Mammary epithelial cell (primary cell): ENCODE measurements at regions of chr20 and their contacts with region 1.

Region 1: GRCh38 chr20:47088335-47088734 is 193.7 kb downstream of the EYA2 start:
- DNase-seq: no peak
- H3K4me3 ChIP-seq: no peak overlapping the region
- H3K27ac ChIP-seq: no peak overlapping the region
- H3K4me1 ChIP-seq: no peaks in the 10 kb centered on the region
- H3K27me3 ChIP-seq: no peaks in the 10 kb centered on the region
- CTCF ChIP-seq: no peak

Region 2: DNA sequence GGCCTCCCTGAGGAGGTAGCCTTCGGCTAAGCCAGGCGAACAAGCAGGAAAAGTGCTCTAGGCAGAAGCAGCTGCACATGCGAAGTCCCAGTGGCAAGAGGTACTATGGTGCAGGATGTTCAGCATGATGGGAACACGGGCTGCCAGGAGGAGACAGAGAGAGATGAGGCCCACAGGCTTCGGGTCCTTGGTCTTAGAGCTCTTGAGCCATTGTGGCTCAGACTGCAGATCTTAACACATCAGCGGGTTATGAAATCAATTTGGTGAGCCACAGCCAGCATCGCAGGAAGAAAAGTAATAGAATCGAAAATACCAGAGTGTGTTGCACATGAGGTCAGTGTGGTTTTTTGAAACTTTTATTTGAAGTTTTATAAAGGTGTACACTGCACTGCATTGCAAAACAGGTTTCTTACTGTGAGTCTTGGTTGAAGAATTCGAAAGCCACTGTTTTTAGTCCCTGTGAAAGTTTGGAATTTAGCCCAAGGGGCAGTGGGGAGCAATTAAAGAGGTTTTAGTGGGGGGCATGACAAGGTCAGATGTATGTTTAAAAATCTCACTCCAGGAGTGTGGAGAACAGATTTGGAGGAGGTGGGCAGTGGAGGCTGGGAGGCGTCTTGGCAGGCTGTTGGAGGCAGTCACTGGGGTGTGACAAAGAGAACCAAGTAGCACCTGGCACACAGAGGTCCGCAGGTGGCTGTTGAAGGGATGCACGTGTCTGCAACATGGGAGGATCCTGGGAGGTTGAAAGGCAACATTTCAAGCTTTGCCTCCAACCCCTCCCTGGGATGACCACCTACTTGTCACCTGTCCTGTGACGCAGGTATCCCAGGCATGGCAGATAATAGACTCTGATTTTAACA is 124.3 kb before region 1 on chr20:
- CTCF ChIA-PET with region 1: no interaction called
- dilution Hi-C with region 1: no loop called
- in situ Hi-C with region 1: no loop called
- intact Hi-C with region 1: no loop called
- DNase-seq: peak; percentile 89
- H3K4me3 ChIP-seq: no peak overlapping the region
- H3K27ac ChIP-seq: no peak overlapping the region
- H3K4me1 ChIP-seq: peaks cover 30% of the 10 kb centered on the region
- H3K27me3 ChIP-seq: no peaks in the 10 kb centered on the region
- CTCF ChIP-seq: no peak

Region 3: DNA sequence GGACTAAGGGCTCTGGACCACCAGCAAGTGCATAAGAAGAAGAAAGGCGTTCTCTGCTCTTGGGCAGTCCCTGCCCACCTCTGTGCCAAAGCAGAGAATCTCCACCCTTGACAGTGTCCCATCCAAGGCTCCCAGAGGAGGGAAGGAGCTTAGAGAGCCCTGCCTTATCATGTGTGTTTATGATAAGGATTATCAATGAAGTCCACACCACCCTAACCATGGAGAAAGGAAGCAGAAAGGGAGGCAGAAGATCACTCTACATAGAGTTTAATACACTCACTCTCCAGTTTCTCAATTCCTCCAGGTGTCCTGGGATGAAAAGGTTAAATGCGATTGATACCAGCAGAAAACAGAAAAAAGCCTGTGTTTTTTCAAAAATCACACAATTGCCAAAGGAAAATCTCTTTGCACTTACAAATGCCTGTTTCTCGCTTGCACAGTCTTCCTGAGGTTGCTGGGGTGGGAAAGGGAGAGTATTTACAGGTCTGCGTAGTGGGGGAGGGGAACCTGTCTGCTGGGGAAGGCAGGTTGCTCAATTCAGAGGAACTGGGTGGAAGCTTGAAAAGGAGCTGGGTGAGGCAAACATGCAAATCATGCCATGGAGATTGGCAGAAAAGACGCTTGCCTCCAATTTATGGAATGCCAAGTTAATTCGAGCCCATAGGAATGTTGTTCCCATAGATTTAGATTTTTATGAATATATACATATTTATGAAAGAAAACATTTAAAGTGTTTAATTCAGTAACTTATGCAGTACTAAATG is 89.7 kb before region 1 on chr20:
- CTCF ChIA-PET with region 1: no interaction called
- dilution Hi-C with region 1: loop called (anchors 5 kb)
- in situ Hi-C with region 1: no loop called
- intact Hi-C with region 1: no loop called
- DNase-seq: no peak
- H3K4me3 ChIP-seq: no peak overlapping the region
- H3K27ac ChIP-seq: no peak overlapping the region
- H3K4me1 ChIP-seq: no peaks in the 10 kb centered on the region
- H3K27me3 ChIP-seq: no peaks in the 10 kb centered on the region
- CTCF ChIP-seq: no peak

Region 4: DNA sequence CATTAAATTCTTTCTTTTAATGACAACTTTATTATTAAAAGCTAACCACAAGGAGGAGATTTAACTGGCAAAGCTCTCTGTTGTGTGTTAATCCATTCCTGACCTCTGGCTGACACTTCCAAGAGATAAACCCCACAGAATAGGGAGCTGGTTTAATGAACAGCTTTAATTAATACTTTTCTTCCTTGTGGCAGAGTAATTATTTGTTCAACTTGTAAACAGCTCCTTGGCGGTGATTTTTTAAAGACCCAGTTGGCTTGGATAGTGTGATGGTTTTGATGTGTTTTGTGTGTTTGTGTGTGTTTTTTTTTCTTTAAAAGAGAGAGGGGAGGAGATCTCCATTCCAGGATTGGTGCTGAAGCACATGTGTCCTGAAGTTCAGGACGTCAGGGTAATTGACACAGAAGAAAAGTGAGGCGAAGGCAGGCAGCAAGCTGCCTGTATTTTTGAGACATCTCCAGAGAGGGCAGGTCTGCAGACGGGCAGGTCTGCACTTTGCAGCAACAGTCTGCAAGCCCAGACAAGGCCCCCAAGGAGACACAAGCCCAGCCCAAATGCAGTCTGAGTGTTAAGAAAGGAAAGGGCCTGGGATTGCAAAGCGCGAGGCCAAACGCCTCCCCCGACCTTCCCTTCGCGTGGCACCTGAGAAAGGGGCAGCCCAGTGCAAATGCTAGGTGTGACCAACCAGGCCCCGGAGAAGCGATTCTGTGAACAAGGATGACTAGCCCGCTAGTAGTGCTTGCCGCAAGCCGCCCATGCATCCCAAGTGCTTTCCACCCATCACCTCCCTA is 37.4 kb after region 1 on chr20:
- CTCF ChIA-PET with region 1: no interaction called
- dilution Hi-C with region 1: loop called (anchors 5 kb)
- in situ Hi-C with region 1: no loop called
- intact Hi-C with region 1: no loop called
- DNase-seq: peak; percentile 94
- H3K4me3 ChIP-seq: peak overlapping the region; percentile 7 to 23 (median 20)
- H3K27ac ChIP-seq: peak overlapping the region; percentile 88
- H3K4me1 ChIP-seq: peaks cover 35% of the 10 kb centered on the region
- H3K27me3 ChIP-seq: no peaks in the 10 kb centered on the region
- CTCF ChIP-seq: peak in 1 of 2 donors; percentile 11

Region 5: DNA sequence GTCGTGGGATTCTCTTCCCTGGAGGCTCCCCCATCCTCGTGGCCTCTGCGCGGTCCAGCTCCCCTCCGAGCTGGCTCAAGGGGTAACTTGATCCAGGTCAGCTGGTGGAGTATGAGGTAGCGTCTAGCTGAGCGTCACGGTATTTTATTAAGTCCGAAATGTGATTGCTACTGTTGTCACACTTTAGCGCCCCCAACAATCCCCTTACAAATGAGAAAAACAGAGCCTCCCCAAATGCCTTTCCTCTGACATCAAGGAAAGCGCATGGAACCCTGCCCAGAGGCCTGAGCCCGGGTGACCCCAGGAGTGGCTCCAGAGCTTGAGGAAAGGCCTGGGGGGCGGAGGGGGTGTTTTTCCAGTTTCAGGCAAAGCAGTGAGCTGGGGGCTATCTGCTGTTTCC is 75.8 kb after region 1 on chr20:
- CTCF ChIA-PET with region 1: no interaction called
- dilution Hi-C with region 1: loop called (anchors 5 kb)
- in situ Hi-C with region 1: no loop called
- intact Hi-C with region 1: no loop called
- DNase-seq: no peak
- H3K4me3 ChIP-seq: no peak overlapping the region
- H3K27ac ChIP-seq: no peak overlapping the region
- H3K4me1 ChIP-seq: no peaks in the 10 kb centered on the region
- H3K27me3 ChIP-seq: no peaks in the 10 kb centered on the region
- CTCF ChIP-seq: no peak

Region 6: GRCh38 chr20:47258745-47259695 is 170.7 kb after region 1 on chr20:
- CTCF ChIA-PET with region 1: no interaction called
- dilution Hi-C with region 1: no loop called
- in situ Hi-C with region 1: no loop called
- intact Hi-C with region 1: no loop called
- DNase-seq: peak; percentile 77
- H3K4me3 ChIP-seq: no peak overlapping the region
- H3K27ac ChIP-seq: peak overlapping the region; percentile 59
- H3K4me1 ChIP-seq: peaks cover 18% of the 10 kb centered on the region
- H3K27me3 ChIP-seq: no peaks in the 10 kb centered on the region
- CTCF ChIP-seq: no peak